ENCODE measurements at regions of chr12 and their contacts with region 1.

Region 1: GRCh38 chr12:50111693-50112455 is at the start of gene COX14:
- DNase-seq: peak; percentile 99
- ATAC-seq: peak; percentile 91
- H3K4me3 Mint-ChIP-seq: peak within 1 kb of the TSS; percentile 100
- H3K27ac Mint-ChIP-seq: peak within 1 kb of the TSS; percentile 99
- H3K4me1 Mint-ChIP-seq: peaks cover 38% of the 10 kb centered on the region
- H3K27me3 Mint-ChIP-seq: no peaks in the 10 kb centered on the region
- total RNA-seq, gene COX14: 26.8 to 44.2 TPM

Region 2: DNA sequence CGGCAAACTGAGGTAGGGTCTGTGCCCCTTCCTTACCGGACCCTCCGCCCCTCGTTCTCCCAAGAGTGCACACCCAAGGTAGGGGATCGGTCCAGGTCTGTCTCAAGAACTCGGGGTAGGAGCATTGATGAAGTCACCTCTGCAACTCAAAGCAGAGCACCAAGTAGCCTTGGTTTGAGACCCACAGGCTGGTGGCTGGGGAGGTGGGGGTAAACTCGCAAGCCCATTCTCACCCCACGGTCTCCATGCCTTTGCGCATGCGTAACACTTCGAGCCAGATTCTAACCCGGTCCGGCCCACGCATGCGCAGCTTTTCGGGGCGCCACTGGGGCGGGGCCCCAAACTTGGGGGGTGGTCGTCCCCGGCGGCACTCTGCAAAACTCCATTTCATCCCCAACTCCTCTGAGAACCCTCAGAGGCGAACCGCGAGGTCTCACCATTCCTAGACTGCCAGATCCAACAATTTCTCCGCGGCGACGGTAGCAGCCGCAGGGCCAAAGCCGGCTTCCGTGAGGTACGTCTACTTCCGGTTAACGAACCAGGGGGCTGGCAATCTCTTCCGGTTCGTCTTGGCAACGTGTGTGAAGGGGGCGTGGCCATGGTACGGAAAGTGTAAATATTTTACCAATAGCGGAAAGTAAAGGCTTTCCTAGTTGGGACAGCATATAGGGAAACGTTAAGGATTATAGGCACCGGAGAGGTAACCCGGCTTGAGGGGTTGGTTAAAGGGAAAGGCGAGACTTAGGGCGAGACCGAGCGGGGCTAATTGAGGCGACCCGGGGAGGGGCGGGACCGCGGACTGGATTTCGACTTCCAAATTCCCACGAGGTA is 544.0 kb before region 1 on chr12 and contains the start of gene MCRS1:
- CTCF ChIA-PET with region 1: no interaction called
- POLR2A ChIA-PET with region 1: no interaction called
- intact Hi-C with region 1: loop called in 1 of 2 experiments (anchors 2 kb)
- DNase-seq: peak; percentile 93
- ATAC-seq: peak; percentile 88
- H3K4me3 Mint-ChIP-seq: peak within 1 kb of the TSS; percentile 90
- H3K27ac Mint-ChIP-seq: peak within 1 kb of the TSS; percentile 95
- H3K4me1 Mint-ChIP-seq: peaks cover 37% of the 10 kb centered on the region
- H3K27me3 Mint-ChIP-seq: no peaks in the 10 kb centered on the region
- total RNA-seq, gene MCRS1: 48.2 to 58.2 TPM

Region 3: GRCh38 chr12:50055831-50056638 is 55.8 kb before region 1 on chr12:
- CTCF ChIA-PET with region 1: interaction called, 10 read pairs
- POLR2A ChIA-PET with region 1: interaction called, 3 read pairs
- intact Hi-C with region 1: no loop called
- DNase-seq: peak; percentile 79
- ATAC-seq: peak; percentile 43
- H3K4me3 Mint-ChIP-seq: peak overlapping the region; percentile 85
- H3K27ac Mint-ChIP-seq: peak overlapping the region; percentile 32
- H3K4me1 Mint-ChIP-seq: peaks cover 33% of the 10 kb centered on the region
- H3K27me3 Mint-ChIP-seq: peaks cover 39% of the 10 kb centered on the region

Region 4: GRCh38 chr12:50132505-50133135 is 20.7 kb after region 1 on chr12:
- CTCF ChIA-PET with region 1: interaction called, 23 read pairs
- POLR2A ChIA-PET with region 1: interaction called, 3 read pairs
- intact Hi-C with region 1: no loop called
- DNase-seq: no peak
- ATAC-seq: peak; percentile 71
- H3K4me3 Mint-ChIP-seq: no peak overlapping the region
- H3K27ac Mint-ChIP-seq: peak overlapping the region; percentile 74
- H3K4me1 Mint-ChIP-seq: peaks cover 6% of the 10 kb centered on the region
- H3K27me3 Mint-ChIP-seq: no peaks in the 10 kb centered on the region

Region 5: DNA sequence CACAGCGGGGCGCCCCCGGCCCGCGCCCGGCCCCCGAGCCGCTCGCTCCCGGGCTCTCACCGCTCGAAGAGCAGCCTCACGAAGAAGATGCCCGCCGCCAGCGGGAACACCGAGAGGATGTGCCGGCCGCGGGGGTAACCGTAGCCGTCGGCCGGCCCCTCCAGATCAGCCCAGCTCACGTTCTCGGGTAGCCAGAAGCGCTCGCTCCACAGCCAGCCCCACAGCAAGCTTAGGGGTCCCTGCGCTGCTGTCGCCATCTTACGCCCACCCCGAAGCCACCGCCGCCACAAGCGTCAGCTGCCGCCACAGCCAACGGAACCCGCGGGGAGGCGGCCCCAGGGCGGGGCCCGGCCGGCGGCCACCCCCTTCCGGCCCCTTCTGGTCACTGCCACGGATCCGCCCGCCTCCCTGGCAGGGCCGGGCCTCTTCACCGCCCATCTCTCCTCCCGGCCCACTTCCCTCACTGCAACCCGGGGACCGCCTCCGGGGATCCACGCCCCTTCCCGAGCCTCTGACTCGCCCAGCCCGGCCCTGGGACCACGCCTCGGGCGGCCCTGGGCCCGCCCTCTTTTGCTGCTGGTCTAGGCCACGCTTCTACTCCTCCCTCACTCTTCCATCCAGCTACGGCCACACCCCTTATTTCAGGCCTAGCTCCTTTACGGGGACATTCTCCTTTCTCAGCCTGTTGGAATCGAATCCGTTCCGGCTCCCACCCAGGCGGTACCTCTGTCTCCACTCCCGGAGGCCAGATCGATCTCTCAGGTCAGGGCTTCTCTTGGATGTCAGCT is 55.4 kb after region 1 on chr12 and contains the start of gene CERS5:
- CTCF ChIA-PET with region 1: interaction called, 33 read pairs
- POLR2A ChIA-PET with region 1: interaction called, 26 read pairs
- intact Hi-C with region 1: loop called (anchors 1 kb)
- DNase-seq: peak; percentile 99
- ATAC-seq: peak; percentile 99
- H3K4me3 Mint-ChIP-seq: peak within 1 kb of the TSS; percentile 85
- H3K27ac Mint-ChIP-seq: peak within 1 kb of the TSS; percentile 96
- H3K4me1 Mint-ChIP-seq: peaks cover 27% of the 10 kb centered on the region
- H3K27me3 Mint-ChIP-seq: no peaks in the 10 kb centered on the region
- total RNA-seq, gene CERS5: 49.4 to 64.4 TPM

Region 6: GRCh38 chr12:50400598-50401364 is 288.9 kb after region 1 on chr12 and contains the start of gene LARP4:
- CTCF ChIA-PET with region 1: no interaction called
- POLR2A ChIA-PET with region 1: no interaction called
- intact Hi-C with region 1: loop called (anchors 1 to 2 kb)
- DNase-seq: peak; percentile 95
- ATAC-seq: peak; percentile 97
- H3K4me3 Mint-ChIP-seq: peak within 1 kb of the TSS; percentile 93
- H3K27ac Mint-ChIP-seq: peak within 1 kb of the TSS; percentile 94
- H3K4me1 Mint-ChIP-seq: peaks cover 13% of the 10 kb centered on the region
- H3K27me3 Mint-ChIP-seq: no peaks in the 10 kb centered on the region
- total RNA-seq, gene LARP4: 66.3 to 72.4 TPM